Activated T-helper 1 cell treated with anti-CD3 and anti-CD28 coated beads, Interleukin-12 subunit alpha, Interleukin-12 subunit beta, Interleukin-2, Interleukin-4 antibody, amounts not matched to agents 30 ng/mL and 10 ng/mL and 1 ng/mL, durations not matched to agents 14 hours and 24 hours and 36 hours (primary cell): ENCODE measurements at regions of chr6 and their contacts with region 1.

Region 1: GRCh38 chr6:46848684-46849360 is 55.6 kb downstream of the MEP1A start:
- DNase-seq: peak; percentile 39
- H3K4me3 Mint-ChIP-seq: no peak overlapping the region
- H3K27ac Mint-ChIP-seq: no peak overlapping the region
- H3K4me1 Mint-ChIP-seq: peaks cover 9% of the 10 kb centered on the region
- H3K27me3 Mint-ChIP-seq: peaks cover 15% of the 10 kb centered on the region

Region 2: DNA sequence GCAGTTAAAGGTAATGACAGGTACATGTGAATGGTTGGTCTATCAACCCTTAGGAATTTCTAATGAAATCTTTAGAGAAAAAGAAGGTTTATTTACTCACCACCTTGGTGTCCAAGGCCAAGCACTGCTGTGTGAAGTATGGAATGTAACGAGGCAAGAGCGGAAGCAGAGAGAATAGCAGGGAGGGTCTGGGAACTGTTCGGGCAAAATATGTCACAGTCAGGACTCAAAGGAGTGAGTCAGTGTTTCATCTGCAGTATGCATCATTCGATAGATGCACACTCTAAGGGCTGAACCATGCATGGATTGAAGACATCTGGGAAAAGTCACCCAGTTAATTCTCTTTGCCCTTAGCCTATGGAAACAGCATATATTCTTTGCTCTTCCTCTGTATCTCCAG is 39.8 kb after region 1 on chr6:
- intact Hi-C with region 1: no loop called
- DNase-seq: no peak
- H3K4me3 Mint-ChIP-seq: no peak overlapping the region
- H3K27ac Mint-ChIP-seq: no peak overlapping the region
- H3K4me1 Mint-ChIP-seq: no peaks in the 10 kb centered on the region
- H3K27me3 Mint-ChIP-seq: peaks cover 2% of the 10 kb centered on the region

Region 3: DNA sequence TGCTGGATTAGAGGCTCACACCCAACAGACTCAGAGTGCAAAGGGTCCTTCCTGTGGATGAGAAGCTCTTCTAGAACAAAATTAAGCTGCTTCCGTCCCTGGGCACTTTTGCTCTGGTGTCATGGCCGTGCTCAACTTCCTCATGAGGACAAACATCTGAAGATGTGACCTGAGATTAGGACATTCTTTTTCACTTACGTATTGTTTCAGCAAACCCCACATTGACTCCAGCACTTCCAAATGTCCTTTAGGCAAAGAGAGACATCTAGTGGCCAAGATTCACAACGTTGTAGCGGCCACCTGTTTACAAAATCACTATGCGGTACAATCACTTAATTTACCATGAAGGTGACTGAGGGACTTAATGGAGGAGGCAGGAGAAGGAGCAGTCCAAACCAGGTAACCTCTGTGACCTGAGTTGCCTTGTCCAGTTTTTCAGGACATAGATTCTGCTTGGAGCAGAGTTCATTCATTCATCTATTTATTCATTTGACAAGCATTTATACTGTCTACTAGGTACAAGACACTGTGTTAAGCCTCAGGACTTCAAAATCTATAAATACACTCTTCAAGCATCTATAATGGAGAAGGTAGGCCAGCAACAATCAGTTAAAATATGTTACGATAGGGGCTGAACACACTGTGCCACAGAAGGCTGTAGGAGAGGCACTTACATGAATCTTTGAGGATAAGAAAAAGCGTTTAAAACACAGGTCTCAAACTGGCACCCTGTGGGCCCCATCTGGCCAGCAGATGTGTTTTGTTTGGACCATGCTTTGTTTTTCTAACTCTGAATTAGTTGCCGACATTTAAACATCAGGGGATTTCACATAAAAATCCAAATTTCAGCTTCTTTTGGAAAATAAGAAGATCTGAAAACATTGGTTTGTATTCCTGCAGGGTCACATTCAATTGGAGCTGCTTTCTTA is 198.9 kb after region 1 on chr6:
- intact Hi-C with region 1: loop called (anchors 1 kb)
- DNase-seq: peak; percentile 2
- H3K4me3 Mint-ChIP-seq: no peak overlapping the region
- H3K27ac Mint-ChIP-seq: no peak overlapping the region
- H3K4me1 Mint-ChIP-seq: peaks cover 5% of the 10 kb centered on the region
- H3K27me3 Mint-ChIP-seq: peaks cover 3% of the 10 kb centered on the region

Region 4: DNA sequence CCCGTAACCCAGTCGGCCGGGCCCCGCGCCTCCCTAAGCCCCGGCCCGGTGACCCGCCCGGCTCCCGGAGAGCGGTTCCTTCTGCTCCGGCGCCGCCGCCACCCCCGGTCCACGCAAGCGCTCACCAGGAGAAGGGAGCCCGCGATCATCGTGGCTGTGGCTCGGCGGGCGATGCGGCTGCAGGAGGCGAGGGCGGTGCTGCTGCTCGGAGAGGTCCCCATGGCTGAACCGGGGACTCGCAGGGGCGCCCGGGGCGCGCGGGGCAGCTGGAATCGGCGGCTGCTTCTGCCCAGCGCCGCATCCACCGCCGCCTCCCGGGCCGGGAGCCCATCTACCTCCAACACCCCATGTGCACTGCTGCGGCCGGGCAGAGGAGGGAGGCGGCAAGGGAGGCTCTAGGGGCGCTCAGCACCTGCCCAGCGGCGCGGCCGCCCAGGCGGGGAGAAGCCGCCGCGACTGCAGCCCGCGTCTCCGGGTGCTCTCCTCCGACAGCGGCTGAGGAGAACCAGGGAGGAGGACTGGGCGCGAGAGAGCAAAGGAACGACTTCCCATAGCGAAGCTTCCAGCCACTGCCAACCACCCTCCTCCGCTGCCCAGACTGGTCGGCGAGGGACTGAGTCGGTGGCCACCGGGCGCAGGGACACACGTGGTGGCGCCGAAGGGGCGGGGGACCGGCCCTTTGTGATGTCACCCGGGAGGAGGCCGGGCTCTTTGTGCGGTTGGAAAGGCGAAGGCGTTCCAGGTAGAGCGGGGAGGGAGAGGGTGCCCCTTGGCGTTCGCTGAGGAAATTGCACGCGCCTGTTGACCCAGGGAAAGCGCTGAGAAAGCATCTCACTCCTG is 460.7 kb after region 1 on chr6 and contains the start of gene TNFRSF21:
- intact Hi-C with region 1: loop called (anchors 1 kb)
- DNase-seq: peak; percentile 75
- H3K4me3 Mint-ChIP-seq: peak within 1 kb of the TSS; percentile 68
- H3K27ac Mint-ChIP-seq: no peak within 1 kb of the TSS
- H3K4me1 Mint-ChIP-seq: peaks cover 16% of the 10 kb centered on the region
- H3K27me3 Mint-ChIP-seq: peaks cover 52% of the 10 kb centered on the region
- total RNA-seq, gene TNFRSF21: 3.5 and 4.2 TPM in 2 replicates